Calu3 (cell line): ENCODE measurements at regions of chr16 and their contacts with region 1.

Region 1: DNA sequence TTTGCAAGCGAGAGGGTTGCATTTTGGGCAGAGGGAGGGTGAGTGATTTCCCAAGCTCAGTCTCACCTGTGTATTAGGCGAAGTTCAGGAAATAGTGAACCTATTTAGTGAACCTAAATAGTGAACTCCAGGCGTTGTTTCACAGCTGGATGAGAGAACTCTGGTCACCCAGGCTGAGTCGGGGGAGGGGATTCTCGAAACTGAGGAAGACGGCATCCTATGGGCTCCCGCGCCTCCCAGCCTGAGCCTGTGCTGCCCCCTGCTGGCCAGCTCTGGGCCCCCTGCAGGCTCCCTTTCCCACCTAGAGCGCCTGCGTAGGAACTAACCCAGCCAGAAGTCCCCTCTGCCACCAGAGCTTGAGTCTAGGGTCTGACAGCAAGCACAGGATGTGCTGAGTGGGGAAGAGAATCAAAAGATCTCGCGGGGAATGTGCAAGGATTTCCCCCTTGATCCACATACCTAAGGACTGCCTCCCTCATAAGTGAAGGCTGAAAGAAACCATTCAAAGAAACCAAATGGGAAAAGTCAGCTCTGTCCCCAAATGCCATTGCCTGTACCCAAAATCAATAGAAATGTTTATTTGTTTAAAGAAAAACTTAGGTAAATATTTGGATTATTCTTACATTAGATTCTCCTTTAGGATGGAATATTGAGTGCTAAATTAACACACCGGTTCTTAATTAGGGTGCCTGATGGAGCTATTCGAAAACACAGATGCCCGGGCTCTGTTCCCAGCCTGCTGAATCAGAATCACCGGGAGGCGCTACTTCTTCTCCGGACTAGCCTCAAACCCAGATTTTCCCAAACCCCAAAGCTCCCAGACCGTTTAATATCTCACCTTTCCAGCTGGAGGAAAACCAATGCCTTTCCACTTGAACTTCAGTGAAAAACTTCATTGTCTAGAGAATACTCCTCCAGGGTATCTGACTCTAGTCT is 14.8 kb upstream of the MARVELD3 start:
- DNase-seq: peak; percentile 95
- H3K4me3 Mint-ChIP-seq: peak overlapping the region; percentile 24
- H3K27ac Mint-ChIP-seq: no peak overlapping the region
- H3K4me1 Mint-ChIP-seq: peaks cover 26% of the 10 kb centered on the region
- H3K27me3 Mint-ChIP-seq: no peaks in the 10 kb centered on the region
- CTCF ChIP-seq: peak; percentile 98

Region 2: DNA sequence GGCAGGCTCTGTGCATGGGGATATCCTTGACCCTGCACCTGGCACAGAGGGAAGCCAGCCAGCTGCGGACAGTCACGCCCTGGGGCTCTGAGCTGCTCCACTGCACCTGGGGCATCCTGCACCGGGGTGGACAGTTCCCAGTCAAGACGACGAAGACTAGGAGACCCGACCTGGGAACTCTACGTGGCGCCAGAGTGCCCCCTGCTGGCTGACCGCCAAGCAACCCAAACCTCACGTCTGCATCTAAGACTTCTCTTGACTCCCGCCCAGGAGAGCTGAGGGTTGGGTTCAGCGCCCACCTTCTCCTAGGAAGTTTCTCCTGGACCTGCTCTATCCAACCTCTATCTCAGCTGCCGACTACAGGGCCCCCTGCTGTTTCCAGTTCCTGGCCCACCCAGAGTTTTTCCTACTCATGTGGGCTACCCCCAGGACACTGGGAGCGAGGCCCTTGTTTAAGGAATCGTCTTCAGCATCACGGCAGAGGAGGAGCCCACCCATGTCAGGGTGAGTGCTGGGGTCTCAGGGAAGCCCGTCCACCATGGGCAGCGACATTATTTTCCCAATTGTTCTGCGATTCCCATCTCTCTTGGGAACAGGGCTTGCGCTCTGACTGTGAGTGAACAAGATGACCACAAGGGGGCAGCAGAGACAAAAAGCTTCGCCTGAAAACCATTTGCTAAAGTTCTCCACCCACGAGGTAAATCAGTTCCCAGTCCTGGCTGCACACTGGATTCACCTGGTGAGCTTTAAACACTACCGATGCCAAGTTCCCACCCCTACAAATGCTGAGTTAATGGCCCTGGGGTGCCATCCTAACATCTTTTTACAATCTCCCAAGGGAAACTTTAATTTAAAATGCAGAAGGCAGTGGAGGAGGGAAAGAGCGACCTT is 198.7 kb before region 1 on chr16:
- CTCF ChIA-PET with region 1: interaction called, 8 read pairs
- intact Hi-C with region 1: loop called (anchors 1 kb)
- DNase-seq: peak; percentile 86
- H3K4me3 Mint-ChIP-seq: peak overlapping the region; percentile 31
- H3K27ac Mint-ChIP-seq: no peak overlapping the region
- H3K4me1 Mint-ChIP-seq: no peaks in the 10 kb centered on the region
- H3K27me3 Mint-ChIP-seq: peaks cover 67% of the 10 kb centered on the region
- CTCF ChIP-seq: peak; percentile 68

Region 3: GRCh38 chr16:71499775-71500364 is 111.3 kb before region 1 on chr16:
- CTCF ChIA-PET with region 1: interaction called, 21 read pairs
- intact Hi-C with region 1: loop called (anchors 2 kb)
- DNase-seq: peak; percentile 72
- H3K4me3 Mint-ChIP-seq: no peak overlapping the region
- H3K27ac Mint-ChIP-seq: no peak overlapping the region
- H3K4me1 Mint-ChIP-seq: peaks cover 2% of the 10 kb centered on the region
- H3K27me3 Mint-ChIP-seq: no peaks in the 10 kb centered on the region
- CTCF ChIP-seq: peak; percentile 77

Region 4: DNA sequence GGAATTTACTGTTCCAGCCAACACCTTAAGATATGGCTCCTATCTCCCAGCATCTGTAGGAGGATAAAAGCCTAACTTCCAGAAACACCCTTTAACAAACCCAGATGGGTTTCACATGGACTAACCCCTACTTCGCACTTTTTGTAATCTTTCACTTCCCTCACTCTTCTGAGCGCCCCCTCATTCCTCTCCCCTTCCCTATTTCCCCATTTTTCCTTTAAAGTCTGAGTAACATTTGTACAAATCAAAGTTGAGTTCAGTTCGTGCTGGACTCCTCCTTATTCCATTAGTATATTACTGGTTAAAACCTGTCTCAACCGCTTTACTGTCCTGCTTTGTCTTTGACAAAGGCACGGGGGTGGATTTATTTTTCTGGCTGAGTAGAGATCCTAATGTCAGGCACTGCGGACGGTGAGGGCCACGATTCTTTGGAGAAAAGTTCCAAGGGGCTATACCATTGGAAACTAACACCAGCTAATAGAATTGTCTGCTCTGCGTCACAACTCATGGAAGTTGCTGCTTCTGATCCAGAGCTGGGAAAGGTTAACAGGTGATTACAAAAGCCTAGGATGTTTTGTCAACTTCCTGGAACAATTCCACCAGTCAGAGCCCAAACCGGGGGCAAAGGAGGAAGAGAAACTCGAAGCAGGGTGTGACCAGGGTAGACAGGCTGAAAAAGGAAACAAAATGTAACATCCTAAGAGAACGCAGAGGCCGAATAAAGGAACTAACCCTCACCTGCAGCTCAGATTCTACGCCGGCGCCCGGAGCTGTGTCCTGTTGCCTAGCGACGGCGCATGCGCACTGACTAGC is 46.8 kb before region 1 on chr16:
- CTCF ChIA-PET with region 1: interaction called, 144 read pairs
- intact Hi-C with region 1: loop called (anchors 1 kb)
- DNase-seq: no peak
- H3K4me3 Mint-ChIP-seq: peak overlapping the region; percentile 74
- H3K27ac Mint-ChIP-seq: peak overlapping the region; percentile 92
- H3K4me1 Mint-ChIP-seq: peaks cover 13% of the 10 kb centered on the region
- H3K27me3 Mint-ChIP-seq: no peaks in the 10 kb centered on the region
- CTCF ChIP-seq: no peak

Region 5: DNA sequence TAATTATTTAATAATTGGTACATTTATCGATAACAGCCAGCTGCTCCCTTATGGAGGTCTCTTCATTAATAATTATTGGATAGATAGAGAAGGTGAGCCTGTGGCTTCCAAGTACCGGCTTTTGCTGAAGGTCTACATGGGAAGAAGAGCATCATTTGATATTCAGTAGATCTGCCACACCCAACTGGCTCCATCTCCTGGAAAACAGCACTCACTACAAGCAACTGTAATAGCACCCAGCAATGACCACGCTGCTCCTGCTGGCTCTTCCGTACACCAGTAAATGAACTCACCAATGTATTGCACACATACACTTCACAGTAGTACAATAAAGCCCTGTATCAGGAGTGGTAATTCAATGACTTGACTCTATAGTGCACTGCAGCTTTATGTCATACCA is 34.2 kb after region 1 on chr16:
- CTCF ChIA-PET with region 1: no interaction called
- intact Hi-C with region 1: loop called (anchors 2 kb)
- DNase-seq: peak; percentile 36
- H3K4me3 Mint-ChIP-seq: no peak overlapping the region
- H3K27ac Mint-ChIP-seq: no peak overlapping the region
- H3K4me1 Mint-ChIP-seq: no peaks in the 10 kb centered on the region
- H3K27me3 Mint-ChIP-seq: no peaks in the 10 kb centered on the region
- CTCF ChIP-seq: peak; percentile 73